GM10248 (cell line): ENCODE measurements at regions of chr2 and their contacts with region 1.

Region 1: DNA sequence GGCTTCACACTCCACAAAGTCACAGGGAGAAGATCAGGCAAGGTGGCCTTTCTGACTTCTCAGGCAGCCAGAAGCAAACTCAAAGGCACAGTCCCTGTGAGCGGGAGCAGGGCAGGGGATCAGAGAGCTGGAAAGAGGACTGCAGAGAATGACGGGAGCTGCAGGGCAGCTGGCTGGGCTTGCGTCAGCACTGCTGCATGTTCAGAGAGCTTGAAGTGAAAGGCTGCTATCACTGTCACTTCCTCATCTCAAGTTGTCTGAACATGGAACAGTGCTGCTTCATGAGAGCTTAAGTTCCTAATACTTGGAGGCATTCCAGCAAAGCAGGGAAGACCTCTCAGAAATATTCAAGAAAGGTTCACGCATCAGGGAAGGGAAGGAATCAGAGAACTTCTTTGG is 20.4 kb downstream of the TGFBRAP1 start:
- DNase-seq: no peak
- CTCF ChIP-seq: no peak

Region 2: DNA sequence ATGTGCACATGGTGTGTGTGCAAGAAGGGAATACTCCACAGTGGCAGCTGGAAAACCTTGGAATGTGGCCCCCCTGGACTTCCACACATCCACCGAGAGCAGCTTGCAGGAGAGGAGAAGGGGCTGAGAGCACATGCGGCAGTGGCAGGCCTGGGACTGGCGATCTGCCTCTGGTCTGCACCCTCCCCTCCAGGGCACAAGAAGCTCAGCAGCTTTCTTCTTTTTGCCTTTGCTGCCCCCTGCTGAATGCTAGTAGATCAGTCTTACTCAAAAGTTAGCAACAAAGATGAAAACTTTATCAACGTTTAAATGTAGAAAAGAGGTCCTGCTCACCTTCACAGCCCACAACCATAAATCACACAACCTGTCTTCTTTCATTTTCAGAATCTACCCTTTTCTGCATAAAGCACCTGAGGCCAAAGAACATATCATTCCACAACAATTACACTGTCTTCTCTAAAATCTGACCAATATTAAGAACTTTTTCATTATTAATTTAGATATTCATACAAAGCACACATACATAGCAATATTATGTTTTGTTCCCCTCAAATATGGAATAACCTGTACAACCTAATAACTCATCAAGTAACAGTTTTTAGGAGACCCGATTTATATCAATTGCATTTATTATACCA is 14.2 kb before region 1 on chr2:
- CTCF ChIA-PET with region 1: interaction called, 27 read pairs
- POLR2A ChIA-PET with region 1: no interaction called
- DNase-seq: peak; percentile 50
- CTCF ChIP-seq: peak; percentile 61